WTC11 (cell line): ENCODE measurements at regions of chr11 and their contacts with region 1.

Region 1: DNA sequence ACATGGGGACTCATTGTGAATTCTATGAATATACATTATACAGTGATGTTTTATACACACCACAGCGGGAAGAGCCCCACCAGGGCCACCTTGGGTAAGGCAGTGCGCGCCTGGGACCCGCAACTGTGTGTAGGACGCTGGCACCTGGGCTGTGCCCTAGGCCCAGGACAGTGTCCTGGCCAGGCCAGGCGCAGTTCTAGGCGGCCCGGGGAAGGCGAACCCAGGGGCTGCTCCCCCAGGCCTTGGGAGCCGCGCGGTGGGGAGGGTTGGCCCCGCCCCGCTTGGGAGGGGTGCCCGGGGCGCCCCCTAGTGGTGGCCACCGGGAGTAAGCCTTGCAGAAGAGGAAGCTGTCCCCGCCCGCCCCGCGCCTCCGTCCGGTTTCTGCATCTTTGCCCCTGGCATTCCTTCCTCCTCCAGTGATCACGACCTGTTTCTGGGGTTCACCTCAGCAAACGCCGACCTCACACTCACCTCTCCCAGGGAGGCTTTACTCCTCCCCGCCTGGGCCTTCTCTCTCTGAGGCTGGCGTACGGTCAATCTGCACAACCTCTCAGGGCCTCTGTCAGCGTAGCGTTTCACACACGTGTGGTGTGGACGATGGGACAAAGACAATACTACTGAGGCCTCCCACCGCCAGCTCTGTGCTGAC is 9.5 kb upstream of the EHD1 start:
- DNase-seq: peak; percentile 91
- ATAC-seq: peak; percentile 88
- H3K4me3 Mint-ChIP-seq: peak overlapping the region; percentile 66
- H3K27ac Mint-ChIP-seq: no peak overlapping the region
- H3K4me1 Mint-ChIP-seq: peaks cover 14% of the 10 kb centered on the region
- H3K27me3 Mint-ChIP-seq: no peaks in the 10 kb centered on the region
- CTCF ChIP-seq: peak; percentile 99

Region 2: DNA sequence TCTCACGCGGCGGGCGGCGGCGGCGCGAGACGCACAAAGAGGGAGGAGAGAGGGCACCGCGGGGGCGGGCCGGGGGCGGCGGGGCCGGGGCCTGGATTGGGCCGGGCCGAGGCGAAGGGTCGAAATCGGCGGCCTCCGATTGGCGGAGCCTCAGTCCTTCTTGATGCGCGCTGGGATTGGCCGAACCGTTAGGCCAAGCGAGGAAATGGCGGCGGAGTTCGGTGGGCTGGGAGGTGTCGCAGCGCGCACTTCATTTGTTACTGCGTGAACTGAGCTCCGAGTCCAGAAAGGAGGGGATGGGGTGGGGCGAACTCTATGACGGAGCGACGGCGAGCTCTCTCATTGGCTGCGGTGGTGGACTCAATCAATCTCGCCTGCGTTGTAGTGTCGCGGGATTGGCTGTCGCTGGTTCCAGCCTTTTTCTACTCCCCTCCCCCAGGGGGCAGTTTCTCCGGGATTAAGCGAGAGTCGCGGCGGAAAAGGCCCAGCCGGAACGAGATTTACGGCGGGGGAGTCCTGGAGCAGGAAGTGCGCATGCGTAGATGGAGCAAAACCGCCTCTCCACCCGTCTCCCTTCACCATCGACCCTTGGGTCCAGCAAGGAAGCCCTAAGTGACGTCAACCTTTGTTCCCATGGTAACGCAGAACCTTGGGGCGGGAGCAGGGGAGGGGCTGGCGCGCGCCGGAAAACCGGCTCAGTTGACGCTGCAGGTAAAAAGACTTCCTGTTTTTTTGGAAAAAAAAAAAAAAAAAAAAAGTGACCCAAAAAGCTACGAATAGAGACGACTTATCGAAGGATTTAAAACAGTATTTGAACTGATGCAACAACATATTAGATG is 109.2 kb before region 1 on chr11 and contains the start of gene SF1:
- CTCF ChIA-PET with region 1: interaction called, 15 read pairs
- POLR2A ChIA-PET with region 1: interaction called, 3 read pairs
- DNase-seq: peak; percentile 98
- ATAC-seq: peak; percentile 95
- H3K4me3 Mint-ChIP-seq: peak within 1 kb of the TSS; percentile 79
- H3K27ac Mint-ChIP-seq: peak within 1 kb of the TSS; percentile 98
- H3K4me1 Mint-ChIP-seq: peaks cover 32% of the 10 kb centered on the region
- H3K27me3 Mint-ChIP-seq: no peaks in the 10 kb centered on the region
- CTCF ChIP-seq: no peak
- total RNA-seq, gene SF1: 285 to 314 TPM (median 300 TPM) in 3 replicates

Region 3: GRCh38 chr11:64864473-64865285 is 23.2 kb before region 1 on chr11:
- CTCF ChIA-PET with region 1: interaction called, 60 read pairs
- POLR2A ChIA-PET with region 1: no interaction called
- DNase-seq: no peak
- ATAC-seq: peak; percentile 18; the same call in 1 of the 2 replicates
- H3K4me3 Mint-ChIP-seq: no peak overlapping the region
- H3K27ac Mint-ChIP-seq: no peak overlapping the region
- H3K4me1 Mint-ChIP-seq: peaks cover 17% of the 10 kb centered on the region
- H3K27me3 Mint-ChIP-seq: no peaks in the 10 kb centered on the region
- CTCF ChIP-seq: no peak

Region 4: GRCh38 chr11:64924102-64924851 is 36.4 kb after region 1 on chr11 and contains the start of gene PPP2R5B:
- CTCF ChIA-PET with region 1: interaction called, 14 read pairs
- POLR2A ChIA-PET with region 1: no interaction called
- DNase-seq: peak; percentile 85
- ATAC-seq: peak; percentile 91
- H3K4me3 Mint-ChIP-seq: peak within 1 kb of the TSS; percentile 93
- H3K27ac Mint-ChIP-seq: peak within 1 kb of the TSS; percentile 99
- H3K4me1 Mint-ChIP-seq: no peaks in the 10 kb centered on the region; the same call in 1 of the 2 replicates
- H3K27me3 Mint-ChIP-seq: no peaks in the 10 kb centered on the region
- CTCF ChIP-seq: no peak
- total RNA-seq, gene PPP2R5B: 8.7 to 10.2 TPM (median 9.1 TPM) in 3 replicates

Region 5: GRCh38 chr11:64996710-64997380 is 109.0 kb after region 1 on chr11 and contains the start of gene BATF2:
- CTCF ChIA-PET with region 1: interaction called, 28 read pairs
- POLR2A ChIA-PET with region 1: no interaction called
- DNase-seq: peak; percentile 76
- ATAC-seq: peak; percentile 97
- H3K4me3 Mint-ChIP-seq: peak within 1 kb of the TSS; percentile 56
- H3K27ac Mint-ChIP-seq: peak within 1 kb of the TSS; percentile 78
- H3K4me1 Mint-ChIP-seq: peaks cover 18% of the 10 kb centered on the region
- H3K27me3 Mint-ChIP-seq: no peaks in the 10 kb centered on the region
- CTCF ChIP-seq: no peak
- total RNA-seq, gene BATF2: 1.3 to 3.2 TPM (median 2.2 TPM) in 3 replicates